ENCODE measurements at regions of chr1 and their contacts with region 1.

Region 1: DNA sequence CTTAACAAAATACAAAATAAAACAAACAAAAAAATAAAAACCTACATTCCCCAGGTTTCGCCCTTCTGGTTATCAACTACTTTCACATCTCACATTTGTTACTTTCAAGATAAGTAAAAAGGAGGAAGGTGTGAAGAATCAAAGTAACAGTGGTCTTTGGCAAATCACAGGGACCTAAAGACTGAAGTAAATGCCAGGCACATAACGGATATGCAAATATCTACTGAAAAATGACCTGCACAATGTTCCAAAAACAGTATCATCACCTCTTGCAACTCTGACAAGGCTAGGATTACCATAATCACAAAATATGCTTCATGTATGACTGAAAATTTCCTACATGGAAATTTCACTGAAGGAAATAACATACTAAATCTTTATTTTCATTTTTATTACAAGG is 29.3 kb downstream of the COP1 start:
- DNase-seq: no peak
- H3K4me3 ChIP-seq: no peak overlapping the region
- H3K4me3 Mint-ChIP-seq: no peak overlapping the region
- H3K27ac Mint-ChIP-seq: peak overlapping the region; percentile 76
- H3K4me1 ChIP-seq: peaks cover 5% of the 10 kb centered on the region
- H3K4me1 Mint-ChIP-seq: peaks cover 13% of the 10 kb centered on the region
- H3K27me3 ChIP-seq: no peaks in the 10 kb centered on the region
- H3K27me3 Mint-ChIP-seq: no peaks in the 10 kb centered on the region
- CTCF ChIP-seq: no peak

Region 2: DNA sequence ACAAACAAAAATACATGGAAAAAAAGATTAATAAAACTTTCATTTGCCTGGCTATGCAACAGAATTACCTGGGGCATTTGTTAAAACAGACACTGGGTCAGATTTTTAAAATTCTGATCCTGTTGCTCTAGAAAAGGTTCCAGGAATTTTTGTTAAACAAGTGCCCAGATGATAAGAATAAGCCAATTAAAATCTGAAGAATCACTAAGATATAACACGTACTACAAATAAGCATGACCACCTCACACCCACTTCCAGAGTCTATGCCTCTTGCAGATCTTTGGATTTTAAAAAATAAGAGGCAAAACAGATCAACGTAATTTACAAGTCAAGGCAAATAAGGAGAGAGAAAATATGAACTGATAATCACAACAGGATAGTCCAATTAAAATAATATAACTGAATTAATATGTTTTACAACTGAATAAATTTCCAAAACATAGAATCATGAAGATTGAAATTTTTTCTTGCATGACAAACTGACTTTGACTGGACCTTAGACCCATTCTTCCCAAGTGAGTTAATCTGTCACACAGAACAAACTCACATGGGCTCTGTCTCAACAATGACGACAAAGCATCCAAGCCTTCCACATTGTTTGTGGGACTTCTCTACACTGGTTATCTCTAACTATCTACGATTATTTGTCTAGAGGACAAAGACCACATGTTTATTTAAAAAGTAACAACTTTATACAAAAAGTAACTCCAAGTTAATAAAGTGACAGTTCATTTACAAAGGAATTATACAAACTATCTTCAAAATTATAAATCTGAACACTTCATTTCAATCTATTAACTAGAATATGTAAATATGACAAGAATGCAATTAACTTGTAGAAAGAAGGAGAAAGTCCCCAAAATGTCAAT is 27.6 kb before region 1 on chr1:
- CTCF ChIA-PET with region 1: no interaction called
- POLR2A ChIA-PET with region 1: no interaction called
- intact Hi-C with region 1: loop called (anchors 1 kb)
- DNase-seq: peak; percentile 72 to 75
- H3K4me3 ChIP-seq: no peak overlapping the region; the same call in 1 of the 2 replicates
- H3K4me3 Mint-ChIP-seq: peak overlapping the region; percentile 71
- H3K27ac Mint-ChIP-seq: peak overlapping the region; percentile 43
- H3K4me1 ChIP-seq: peaks cover 39% of the 10 kb centered on the region
- H3K4me1 Mint-ChIP-seq: peaks cover 8% of the 10 kb centered on the region
- H3K27me3 ChIP-seq: no peaks in the 10 kb centered on the region
- H3K27me3 Mint-ChIP-seq: no peaks in the 10 kb centered on the region
- CTCF ChIP-seq: no peak